Right ventricle myocardium inferior (tissue), 1 donor: ENCODE measurements at regions of chr9 and their contacts with region 1.

Region 1: GRCh38 chr9:37119907-37120842 is at the start of gene ZCCHC7:
- DNase-seq: peak; percentile 99
- ATAC-seq: peak; percentile 100
- total RNA-seq, gene ZCCHC7: 7.6 TPM

Region 2: DNA sequence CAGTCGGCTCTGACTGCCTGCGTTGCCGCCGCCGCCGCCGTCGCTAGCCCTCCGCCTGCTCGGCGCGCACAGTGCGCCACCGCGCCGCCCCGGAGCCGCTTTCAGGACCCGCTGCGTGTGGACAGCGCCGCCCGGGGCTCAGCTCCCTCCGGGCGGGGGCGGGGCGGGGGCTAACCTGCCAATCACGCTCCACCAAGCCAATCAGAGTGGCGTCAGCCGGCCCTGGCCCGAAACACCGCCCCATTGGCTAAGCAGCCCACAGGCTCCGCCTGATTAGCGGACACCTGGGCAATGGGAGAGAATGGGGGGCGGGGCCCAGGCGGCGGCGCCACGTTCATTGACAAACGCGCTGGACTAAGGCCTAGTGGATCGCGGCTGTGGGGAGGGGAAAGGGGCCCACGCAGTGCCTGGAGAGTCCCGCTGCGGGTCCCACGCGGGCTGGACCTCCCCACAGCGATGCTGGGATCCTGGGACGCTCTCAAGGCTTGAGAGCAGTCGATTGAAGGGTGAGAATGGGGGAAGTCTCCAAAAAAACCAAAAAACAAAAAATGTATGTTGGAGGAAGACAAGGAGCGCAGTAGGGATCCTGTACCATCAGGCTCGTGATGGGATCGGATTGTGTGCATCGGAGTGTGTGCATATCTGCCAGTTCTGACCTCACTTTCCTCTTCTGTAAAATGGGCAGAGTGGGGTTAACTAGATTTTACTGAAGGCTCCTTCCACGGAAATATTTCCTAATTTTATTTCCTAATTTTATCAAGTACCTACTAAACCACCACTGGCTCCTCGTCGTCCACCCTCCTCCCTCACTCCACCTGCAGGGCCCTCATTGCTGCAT is 92.4 kb before region 1 on chr9:
- intact Hi-C with region 1: no loop called
- DNase-seq: peak; percentile 87
- ATAC-seq: peak; percentile 95

Region 3: DNA sequence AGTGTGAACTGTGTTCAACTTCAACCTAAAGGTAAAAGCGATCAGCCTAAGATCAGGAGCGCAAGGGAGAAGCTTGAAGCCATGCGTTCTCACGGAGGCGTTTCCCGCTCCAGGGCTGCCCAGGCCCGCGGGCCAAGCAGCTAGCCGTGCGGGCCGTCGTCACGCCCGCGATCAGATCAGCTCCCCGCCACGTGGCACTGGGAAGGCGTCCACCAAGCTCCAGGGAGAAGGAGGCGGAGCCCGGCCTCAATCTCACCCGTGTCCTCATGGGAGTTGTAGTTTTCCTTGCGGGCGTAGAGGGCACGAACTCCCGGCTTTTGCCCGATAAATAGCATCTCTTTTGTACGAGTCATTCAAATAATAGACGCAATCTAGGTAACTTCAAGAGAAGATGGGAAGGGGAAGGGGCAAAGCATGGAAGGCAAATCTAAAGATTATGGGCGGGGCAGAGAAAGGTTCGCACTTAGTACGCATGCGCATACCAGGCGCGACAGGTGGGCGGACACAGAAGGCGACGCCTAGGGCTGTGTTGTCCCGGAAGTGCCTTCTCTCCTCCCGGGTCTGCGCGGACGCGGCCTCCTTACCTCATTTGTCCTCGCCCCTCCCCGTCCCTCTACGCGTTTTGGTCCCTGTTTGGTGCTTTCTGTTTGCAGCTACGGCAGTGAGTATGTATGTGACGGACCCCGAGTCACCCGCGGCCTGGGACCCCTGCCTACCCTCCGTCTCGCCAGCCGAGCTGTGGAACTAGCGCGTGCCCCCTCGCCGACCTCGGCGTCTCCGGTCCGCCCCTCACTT is 40.6 kb before region 1 on chr9:
- intact Hi-C with region 1: loop called (anchors 2 kb)
- DNase-seq: peak; percentile 95
- ATAC-seq: peak; percentile 99

Region 4: GRCh38 chr9:37293664-37294524 is 173.7 kb after region 1 on chr9:
- intact Hi-C with region 1: loop called (anchors 10 kb)
- DNase-seq: no peak
- ATAC-seq: no peak